Caco-2 (cell line): ENCODE measurements at regions of chr11 and their contacts with region 1.

Region 1: GRCh38 chr11:66311965-66312548 is 4.8 kb downstream of the CD248 start:
- DNase-seq: peak; percentile 97
- H3K4me3 ChIP-seq: peak overlapping the region; percentile 52
- H3K4me3 Mint-ChIP-seq: peak overlapping the region; percentile 87
- H3K27ac Mint-ChIP-seq: peak overlapping the region; percentile 91
- H3K4me1 ChIP-seq: peaks cover 14% of the 10 kb centered on the region
- H3K4me1 Mint-ChIP-seq: no peaks in the 10 kb centered on the region
- H3K27me3 ChIP-seq: no peaks in the 10 kb centered on the region
- H3K27me3 Mint-ChIP-seq: no peaks in the 10 kb centered on the region
- CTCF ChIP-seq: peak in 1 of 2 experiments; percentile 88

Region 2: DNA sequence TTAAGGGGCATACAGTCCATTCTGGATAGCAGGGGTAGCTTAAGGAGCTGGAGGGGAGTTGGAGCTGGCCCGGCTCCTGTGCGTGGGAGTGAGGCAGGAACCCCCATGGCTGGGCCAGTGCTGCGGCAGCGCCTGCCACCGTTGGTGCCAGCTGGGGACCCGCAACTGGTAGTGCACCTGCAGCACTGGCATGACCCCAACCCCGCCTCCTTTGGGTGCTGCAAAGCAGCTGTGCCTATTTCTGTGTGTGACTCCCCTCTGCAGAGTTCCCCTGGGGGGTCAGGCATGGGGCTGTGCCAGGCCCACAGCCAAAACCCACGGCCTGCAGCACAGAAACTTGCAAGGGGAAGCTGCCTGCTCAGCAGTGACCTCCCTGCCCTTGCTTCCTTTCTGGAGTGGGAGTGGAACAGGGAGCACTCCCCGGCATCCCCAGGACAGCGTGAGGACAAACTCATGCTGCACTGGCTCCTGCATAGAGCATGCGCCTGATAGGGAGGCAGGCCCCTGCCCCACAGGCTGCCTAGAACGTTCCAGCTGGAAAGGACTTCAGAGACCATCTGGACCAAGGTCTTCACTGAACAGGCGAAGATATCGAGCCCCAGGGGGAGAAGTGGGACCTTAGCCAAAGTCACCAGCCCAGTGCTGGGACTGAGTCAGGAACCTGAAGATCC is 69.8 kb before region 1 on chr11:
- CTCF ChIA-PET with region 1: no interaction called
- POLR2A ChIA-PET with region 1: no interaction called
- intact Hi-C with region 1: no loop called
- DNase-seq: no peak
- H3K4me3 ChIP-seq: no peak overlapping the region
- H3K4me3 Mint-ChIP-seq: no peak overlapping the region
- H3K27ac Mint-ChIP-seq: no peak overlapping the region
- H3K4me1 ChIP-seq: no peaks in the 10 kb centered on the region
- H3K4me1 Mint-ChIP-seq: no peaks in the 10 kb centered on the region
- H3K27me3 ChIP-seq: no peaks in the 10 kb centered on the region
- H3K27me3 Mint-ChIP-seq: no peaks in the 10 kb centered on the region
- CTCF ChIP-seq: no peak

Region 3: DNA sequence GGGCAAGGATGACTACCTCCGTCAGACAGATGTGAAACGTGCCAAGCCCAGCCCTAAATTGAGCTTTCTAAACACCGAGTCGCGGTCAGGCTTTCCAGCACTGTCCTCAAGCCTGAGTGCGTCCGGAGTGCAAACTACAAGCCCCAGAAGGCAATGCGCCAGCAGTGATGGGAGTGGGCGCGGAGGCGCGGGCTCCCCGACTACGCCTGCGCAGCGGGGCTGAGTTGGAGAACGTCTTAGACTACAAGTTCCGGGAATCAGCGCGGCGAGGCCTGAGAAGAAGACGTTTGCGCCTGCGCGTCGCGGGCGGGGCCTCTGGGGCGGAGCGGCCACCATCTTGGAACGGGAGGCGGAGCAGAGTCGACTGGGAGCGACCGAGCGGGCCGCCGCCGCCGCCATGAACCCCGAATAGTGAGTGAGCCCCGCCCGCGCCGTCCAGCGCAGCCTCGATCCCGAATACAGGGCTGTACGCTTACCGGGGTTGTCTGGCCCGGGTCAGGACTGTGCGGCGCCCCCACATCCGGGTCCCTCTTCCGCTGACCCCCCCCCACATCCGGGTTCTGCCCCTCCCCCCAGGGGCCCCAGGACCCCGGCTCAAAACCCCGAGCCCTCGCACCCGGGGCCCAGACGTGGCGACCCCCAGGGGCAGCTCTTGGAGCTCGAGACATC is 43.6 kb before region 1 on chr11 and contains the start of gene RAB1B:
- CTCF ChIA-PET with region 1: interaction called, 5 read pairs
- POLR2A ChIA-PET with region 1: interaction called, 3 read pairs
- intact Hi-C with region 1: loop called (anchors 1 kb)
- DNase-seq: peak; percentile 100
- H3K4me3 ChIP-seq: peak within 1 kb of the TSS; percentile 78
- H3K4me3 Mint-ChIP-seq: peak within 1 kb of the TSS; percentile 92
- H3K27ac Mint-ChIP-seq: peak within 1 kb of the TSS; percentile 87
- H3K4me1 ChIP-seq: no peaks in the 10 kb centered on the region
- H3K4me1 Mint-ChIP-seq: peaks cover 8% of the 10 kb centered on the region
- H3K27me3 ChIP-seq: no peaks in the 10 kb centered on the region
- H3K27me3 Mint-ChIP-seq: no peaks in the 10 kb centered on the region
- CTCF ChIP-seq: no peak
- total RNA-seq, gene RAB1B: 128 and 132 TPM in 2 replicates

Region 4: DNA sequence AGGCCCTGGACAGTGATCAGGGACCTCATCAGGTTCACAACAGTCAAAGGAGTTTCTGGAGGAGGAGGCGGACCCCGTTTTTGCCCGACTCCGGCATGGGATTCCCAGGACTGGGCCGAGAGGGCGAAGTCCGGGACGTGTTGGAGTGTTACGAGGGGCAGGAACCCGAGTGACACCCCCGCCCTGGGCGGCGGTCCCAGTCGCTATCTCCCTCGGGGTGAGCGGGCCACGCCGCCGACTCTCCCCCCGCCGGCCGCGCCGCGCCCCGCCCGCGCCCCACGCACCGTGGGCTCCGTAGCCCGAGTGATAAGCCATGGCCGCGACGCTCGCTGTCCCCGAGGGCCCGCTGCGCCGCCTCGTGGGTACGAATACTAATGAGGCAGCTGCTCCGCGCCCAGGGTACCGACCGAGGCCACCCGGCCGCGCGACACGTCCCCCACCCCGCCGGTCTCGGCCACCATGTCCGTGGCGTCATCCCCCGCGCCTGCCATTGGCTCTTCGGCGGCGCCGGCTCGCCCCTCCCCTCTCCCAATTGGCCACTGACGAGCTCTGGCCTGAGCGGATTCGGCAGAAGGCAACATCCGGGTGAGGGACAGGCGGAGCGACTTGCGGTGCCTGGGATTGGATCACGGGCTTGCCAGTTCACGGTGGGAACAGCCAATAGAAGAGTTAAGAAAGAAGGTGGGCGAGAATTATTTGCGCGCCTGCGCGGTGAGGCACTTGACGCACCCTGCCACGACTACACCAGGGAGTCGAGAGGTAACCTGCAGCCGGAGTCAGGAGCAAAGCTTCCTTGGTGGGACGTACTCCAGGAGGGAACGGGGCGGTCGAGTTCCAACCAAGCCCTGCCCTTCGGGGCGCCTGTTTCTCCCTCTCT is 23.1 kb before region 1 on chr11 and contains the start of gene YIF1A:
- CTCF ChIA-PET with region 1: interaction called, 43 read pairs
- POLR2A ChIA-PET with region 1: interaction called, 34 read pairs
- intact Hi-C with region 1: no loop called
- DNase-seq: peak; percentile 99 to 100
- H3K4me3 ChIP-seq: peak within 1 kb of the TSS; percentile 63
- H3K4me3 Mint-ChIP-seq: peak within 1 kb of the TSS; percentile 87
- H3K27ac Mint-ChIP-seq: peak within 1 kb of the TSS; percentile 94
- H3K4me1 ChIP-seq: peaks cover 23% of the 10 kb centered on the region
- H3K4me1 Mint-ChIP-seq: peaks cover 22% of the 10 kb centered on the region
- H3K27me3 ChIP-seq: no peaks in the 10 kb centered on the region; the same call in 1 of the 2 replicates
- H3K27me3 Mint-ChIP-seq: peaks cover 6% of the 10 kb centered on the region
- CTCF ChIP-seq: peak in 1 of 2 experiments; percentile 25
- total RNA-seq, gene YIF1A: 140 and 159 TPM in 2 replicates

Region 5: GRCh38 chr11:66328307-66329144 is 16.5 kb after region 1 on chr11:
- CTCF ChIA-PET with region 1: interaction called, 90 read pairs
- POLR2A ChIA-PET with region 1: interaction called, 3 read pairs
- intact Hi-C with region 1: loop called (anchors 1 kb)
- DNase-seq: peak; percentile 83 to 89
- H3K4me3 ChIP-seq: no peak overlapping the region
- H3K4me3 Mint-ChIP-seq: peak overlapping the region; percentile 32
- H3K27ac Mint-ChIP-seq: peak overlapping the region; percentile 15
- H3K4me1 ChIP-seq: peaks cover 41% of the 10 kb centered on the region
- H3K4me1 Mint-ChIP-seq: peaks cover 17% of the 10 kb centered on the region
- H3K27me3 ChIP-seq: no peaks in the 10 kb centered on the region
- H3K27me3 Mint-ChIP-seq: no peaks in the 10 kb centered on the region
- CTCF ChIP-seq: peak; percentile 95 to 97

Region 6: GRCh38 chr11:66344550-66345315 is 32.7 kb after region 1 on chr11 and contains the start of gene BRMS1:
- CTCF ChIA-PET with region 1: interaction called, 17 read pairs
- POLR2A ChIA-PET with region 1: interaction called, 10 read pairs
- intact Hi-C with region 1: loop called (anchors 2 kb)
- DNase-seq: peak; percentile 97 to 98
- H3K4me3 ChIP-seq: peak within 1 kb of the TSS; percentile 99
- H3K4me3 Mint-ChIP-seq: peak within 1 kb of the TSS; percentile 86
- H3K27ac Mint-ChIP-seq: peak within 1 kb of the TSS; percentile 99
- H3K4me1 ChIP-seq: peaks cover 22% of the 10 kb centered on the region
- H3K4me1 Mint-ChIP-seq: peaks cover 34% of the 10 kb centered on the region
- H3K27me3 ChIP-seq: no peaks in the 10 kb centered on the region
- H3K27me3 Mint-ChIP-seq: peaks cover 4% of the 10 kb centered on the region
- CTCF ChIP-seq: peak in 1 of 2 experiments; percentile 19
- total RNA-seq, gene BRMS1: 58.1 and 58.2 TPM in 2 replicates